ENCODE measurements at regions of chr15 and their contacts with region 1.

Region 1: DNA sequence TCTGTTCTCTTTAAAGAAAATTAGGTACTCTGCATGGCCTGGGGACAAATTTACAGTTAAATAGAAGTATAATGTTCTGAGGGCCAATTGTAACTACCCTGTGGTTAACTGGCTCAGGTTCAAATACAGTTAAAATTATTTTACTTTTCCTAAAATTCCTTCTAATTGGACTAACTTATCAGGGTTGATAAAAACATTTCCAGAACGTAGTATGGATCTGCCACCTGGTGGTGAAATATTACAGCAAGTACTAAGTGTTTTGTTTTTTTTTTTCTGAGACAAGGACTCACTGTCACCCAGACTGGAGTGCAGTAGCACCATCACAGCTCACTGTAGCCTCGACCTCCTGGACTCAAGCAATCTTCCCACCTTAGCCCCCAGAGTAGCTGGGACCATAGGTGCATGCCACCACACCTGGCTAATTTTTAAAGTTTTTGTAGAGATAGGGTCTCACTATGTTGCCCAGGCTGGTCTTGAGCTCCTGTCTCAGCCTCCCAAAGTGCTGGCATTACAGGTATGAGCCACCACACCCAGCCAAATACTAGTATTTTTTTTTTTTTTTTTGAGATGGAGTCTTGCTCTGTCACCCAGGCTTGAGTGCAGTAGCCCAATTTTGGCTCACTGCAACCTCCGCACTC is 29.2 kb downstream of the NEO1 start:
- H3K4me3 ChIP-seq: no peak overlapping the region
- H3K27ac ChIP-seq: no peak overlapping the region
- H3K4me1 ChIP-seq: peaks cover 12% of the 10 kb centered on the region
- CTCF ChIP-seq: peak; percentile 67

Region 2: DNA sequence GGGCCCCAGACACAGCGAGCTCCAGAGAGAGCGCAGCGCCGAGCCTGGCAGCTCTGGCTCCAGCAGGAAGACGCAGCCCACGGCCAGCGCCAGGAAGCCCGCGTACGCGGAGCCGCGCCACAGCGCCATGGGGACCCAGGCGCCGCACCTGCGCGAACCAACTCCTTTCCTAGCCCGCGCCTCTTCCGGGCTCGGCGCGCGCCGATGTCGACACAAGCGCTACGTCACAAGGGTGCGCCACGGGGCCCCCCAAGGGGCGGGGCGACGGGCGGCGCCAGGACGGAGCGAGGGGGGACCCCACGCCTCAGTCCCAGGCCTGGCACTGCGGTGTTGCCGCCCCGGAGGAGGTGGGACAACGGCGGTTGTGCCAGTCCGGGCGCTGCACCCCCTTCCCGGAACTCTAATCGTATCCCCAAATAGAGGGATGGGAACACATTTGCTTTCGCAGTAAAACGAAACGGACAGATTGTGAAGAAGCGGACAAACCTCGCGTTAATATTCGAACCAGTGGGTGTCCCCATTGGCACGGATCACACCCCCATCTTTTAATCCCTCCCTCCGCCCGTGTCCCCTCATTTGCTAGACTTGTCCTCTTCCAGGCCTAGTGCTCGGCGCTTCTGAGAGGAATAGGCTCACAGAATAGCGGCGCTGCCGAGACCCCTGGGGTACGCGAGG is 297.7 kb before region 1 on chr15 and contains the start of gene ADPGK:
- CTCF ChIA-PET with region 1: interaction called, 18 read pairs
- POLR2A ChIA-PET with region 1: no interaction called
- H3K4me3 ChIP-seq: peak within 1 kb of the TSS; percentile 58
- H3K27ac ChIP-seq: peak within 1 kb of the TSS; percentile 67
- H3K4me1 ChIP-seq: no peaks in the 10 kb centered on the region
- CTCF ChIP-seq: peak; percentile 6; the same call in 1 of the 2 replicates

Region 3: GRCh38 chr15:72796515-72797337 is 284.7 kb before region 1 on chr15:
- CTCF ChIA-PET with region 1: interaction called, 33 read pairs
- POLR2A ChIA-PET with region 1: no interaction called
- H3K4me3 ChIP-seq: peak overlapping the region; percentile 57
- H3K27ac ChIP-seq: peak overlapping the region; percentile 68; the same call in 1 of the 2 replicates
- H3K4me1 ChIP-seq: peaks cover 5% of the 10 kb centered on the region
- CTCF ChIP-seq: 0 out of 2 replicates have a peak, but pooled peaks have one; percentile 7

Region 4: GRCh38 chr15:72835294-72835890 is 246.0 kb before region 1 on chr15:
- CTCF ChIA-PET with region 1: interaction called, 10 read pairs
- POLR2A ChIA-PET with region 1: interaction called, 3 read pairs
- H3K4me3 ChIP-seq: no peak overlapping the region
- H3K27ac ChIP-seq: no peak overlapping the region
- H3K4me1 ChIP-seq: no peaks in the 10 kb centered on the region
- CTCF ChIP-seq: peak; percentile 38; the same call in 1 of the 2 replicates

Region 5: DNA sequence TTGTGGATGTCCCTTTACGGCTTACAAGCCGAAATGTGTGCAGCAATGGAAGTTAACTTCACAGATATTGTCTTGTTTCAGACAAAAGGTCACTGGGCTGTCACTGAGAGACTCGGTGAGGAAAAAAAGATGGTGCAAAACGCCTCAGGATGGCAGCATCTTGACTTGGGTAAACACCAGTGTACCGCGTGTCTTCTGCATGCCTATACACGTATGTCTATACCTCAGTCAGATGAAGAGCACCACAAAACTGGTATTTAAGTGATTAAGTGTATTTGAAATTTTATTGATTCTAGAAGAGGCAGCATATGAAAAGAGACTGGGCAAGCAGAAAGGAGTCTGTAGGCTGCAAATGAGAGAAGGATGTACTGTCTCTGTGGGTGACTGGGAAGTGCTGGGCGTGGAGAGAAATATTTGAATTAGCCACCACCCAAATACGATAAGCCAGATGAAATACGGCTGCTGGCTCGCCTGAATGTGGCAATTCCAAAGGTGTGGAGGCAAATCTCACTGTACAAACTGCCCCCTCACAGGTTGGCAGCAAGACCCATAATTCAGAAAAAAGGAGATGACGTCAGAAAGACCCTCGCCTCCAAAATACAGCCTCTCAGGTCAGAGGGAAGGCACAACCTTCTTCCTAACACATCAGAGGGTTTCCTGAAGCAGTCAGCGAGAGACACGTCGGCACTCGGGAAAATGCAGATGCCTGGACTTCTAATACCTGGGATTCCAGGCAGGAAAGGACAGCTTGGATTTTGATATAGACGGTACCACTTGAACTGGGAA is 82.6 kb before region 1 on chr15:
- CTCF ChIA-PET with region 1: no interaction called
- POLR2A ChIA-PET with region 1: no interaction called
- H3K4me3 ChIP-seq: no peak overlapping the region
- H3K27ac ChIP-seq: no peak overlapping the region
- H3K4me1 ChIP-seq: peaks cover 18% of the 10 kb centered on the region
- CTCF ChIP-seq: no peak

Region 6: GRCh38 chr15:73105064-73105463 is 23.6 kb after region 1 on chr15:
- CTCF ChIA-PET with region 1: no interaction called
- POLR2A ChIA-PET with region 1: no interaction called
- H3K4me3 ChIP-seq: no peak overlapping the region
- H3K27ac ChIP-seq: no peak overlapping the region
- H3K4me1 ChIP-seq: no peaks in the 10 kb centered on the region
- CTCF ChIP-seq: no peak